BJ (cell line): ENCODE measurements at regions of chr11 and their contacts with region 1.

Region 1: GRCh38 chr11:126303623-126304456 is at the start of gene DCPS:
- DNase-seq: peak; percentile 73
- H3K4me3 ChIP-seq: peak within 1 kb of the TSS; percentile 69
- H3K27me3 ChIP-seq: no peaks in the 10 kb centered on the region
- CTCF ChIP-seq: no peak
- polyA plus RNA-seq, gene DCPS: 14.9 and 23.5 TPM in 2 replicates

Region 2: GRCh38 chr11:126416542-126417090 is 112.8 kb after region 1 on chr11:
- CTCF ChIA-PET with region 1: interaction called, 3 read pairs
- POLR2A ChIA-PET with region 1: interaction called, 12 read pairs
- DNase-seq: no peak
- H3K4me3 ChIP-seq: peak overlapping the region; percentile 45
- H3K27me3 ChIP-seq: no peaks in the 10 kb centered on the region
- CTCF ChIP-seq: no peak